Panc1 (cell line): ENCODE measurements at regions of chr15 and their contacts with region 1.

Region 1: DNA sequence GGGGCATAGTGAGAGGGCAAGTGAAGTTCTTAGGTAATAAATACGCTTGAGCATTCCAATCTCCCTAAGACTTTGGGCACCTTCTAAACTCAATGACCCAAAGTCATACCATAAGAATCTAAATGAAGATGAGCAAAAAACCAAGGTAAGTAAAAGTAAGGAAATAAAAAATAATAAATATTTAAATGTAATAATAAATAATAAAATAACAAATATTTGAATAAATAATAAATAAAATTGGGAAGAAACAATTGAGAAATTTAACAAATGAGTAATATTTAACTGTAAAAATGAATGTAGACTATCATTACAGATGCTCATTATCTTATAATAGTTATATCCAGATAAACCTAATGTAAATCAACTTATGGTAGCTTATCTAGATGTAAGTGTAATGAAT is 391.7 kb downstream of the WDR72 start:
- DNase-seq: no peak
- ATAC-seq: no peak
- H3K4me3 ChIP-seq: no peak overlapping the region
- H3K27ac ChIP-seq: no peak overlapping the region
- H3K4me1 ChIP-seq: no peaks in the 10 kb centered on the region
- H3K27me3 ChIP-seq: no peaks in the 10 kb centered on the region
- CTCF ChIP-seq: no peak

Region 2: GRCh38 chr15:53454843-53455721 is 87.3 kb after region 1 on chr15:
- CTCF ChIA-PET with region 1: no interaction called
- POLR2A ChIA-PET with region 1: no interaction called
- in situ Hi-C with region 1: no loop called
- intact Hi-C with region 1: loop called (anchors 5 kb)
- DNase-seq: no peak
- ATAC-seq: no peak
- H3K4me3 ChIP-seq: no peak overlapping the region
- H3K27ac ChIP-seq: no peak overlapping the region
- H3K4me1 ChIP-seq: no peaks in the 10 kb centered on the region
- H3K27me3 ChIP-seq: no peaks in the 10 kb centered on the region
- CTCF ChIP-seq: no peak